Psoas muscle (tissue), 8 donors: ENCODE measurements at regions of chr7 and their contacts with region 1.

Region 1: DNA sequence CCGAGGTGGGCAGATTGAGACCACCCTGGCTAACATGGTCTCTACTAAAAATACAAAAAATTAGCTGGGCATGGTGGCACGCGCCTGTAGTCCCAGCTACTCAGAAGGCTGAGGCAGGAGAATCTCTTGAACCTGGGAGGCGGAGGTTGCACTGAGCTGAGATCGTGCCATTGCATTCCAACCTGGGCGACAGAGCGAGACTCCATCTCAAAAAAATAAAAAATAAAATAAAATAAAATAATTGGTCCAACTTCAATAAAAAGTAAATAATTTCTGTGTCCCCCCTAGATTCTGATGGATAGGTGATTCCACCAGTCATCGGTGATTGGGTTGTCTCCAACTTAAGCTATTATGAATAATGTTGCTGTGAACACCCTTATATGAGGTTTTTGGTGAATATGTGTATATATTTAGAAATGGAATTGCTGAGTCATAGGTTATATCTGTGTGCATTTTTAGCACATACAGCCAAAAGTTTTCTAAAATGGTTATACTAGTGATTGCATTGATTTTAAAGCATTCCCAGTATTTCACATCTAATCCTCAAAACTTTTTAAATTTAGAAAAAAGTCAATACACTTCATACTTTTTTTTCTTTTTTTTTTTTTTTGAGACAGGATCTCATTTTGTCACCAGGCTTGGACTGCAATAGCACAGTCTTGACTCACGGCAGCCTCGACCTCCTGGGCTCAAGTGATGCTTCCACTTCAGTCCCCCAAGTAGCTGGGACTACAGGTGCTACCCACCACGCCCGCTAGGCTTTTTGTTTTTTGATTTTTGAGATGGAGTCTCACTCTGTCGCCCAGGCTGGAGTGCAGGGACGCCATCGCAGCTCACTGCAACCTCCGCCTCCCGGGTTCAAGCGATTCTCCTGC is 13.7 kb upstream of the SRPK2 start:
- DNase-seq: no peak
- ATAC-seq: no peak
- H3K4me3 ChIP-seq: no peak overlapping the region
- H3K27ac ChIP-seq: no peak overlapping the region
- H3K4me1 ChIP-seq: no peaks in the 10 kb centered on the region
- H3K27me3 ChIP-seq: no peaks in the 10 kb centered on the region
- CTCF ChIP-seq: no peak

Region 2: GRCh38 chr7:105268511-105269392 is 133.7 kb before region 1 on chr7:
- intact Hi-C with region 1: no loop called
- DNase-seq: no peak
- ATAC-seq: peak; percentile 86 to 93 (median 89)
- H3K4me3 ChIP-seq: peak overlapping the region; percentile 73
- H3K27ac ChIP-seq: peak overlapping the region; percentile 90
- H3K4me1 ChIP-seq: peaks cover 24% of the 10 kb centered on the region
- H3K27me3 ChIP-seq: no peaks in the 10 kb centered on the region
- CTCF ChIP-seq: no peak

Region 3: GRCh38 chr7:105304040-105304895 is 98.2 kb before region 1 on chr7:
- intact Hi-C with region 1: no loop called
- DNase-seq: no peak
- ATAC-seq: no peak
- H3K4me3 ChIP-seq: no peak overlapping the region
- H3K27ac ChIP-seq: no peak overlapping the region
- H3K4me1 ChIP-seq: peaks cover 27% of the 10 kb centered on the region
- H3K27me3 ChIP-seq: no peaks in the 10 kb centered on the region
- CTCF ChIP-seq: no peak

Region 4: DNA sequence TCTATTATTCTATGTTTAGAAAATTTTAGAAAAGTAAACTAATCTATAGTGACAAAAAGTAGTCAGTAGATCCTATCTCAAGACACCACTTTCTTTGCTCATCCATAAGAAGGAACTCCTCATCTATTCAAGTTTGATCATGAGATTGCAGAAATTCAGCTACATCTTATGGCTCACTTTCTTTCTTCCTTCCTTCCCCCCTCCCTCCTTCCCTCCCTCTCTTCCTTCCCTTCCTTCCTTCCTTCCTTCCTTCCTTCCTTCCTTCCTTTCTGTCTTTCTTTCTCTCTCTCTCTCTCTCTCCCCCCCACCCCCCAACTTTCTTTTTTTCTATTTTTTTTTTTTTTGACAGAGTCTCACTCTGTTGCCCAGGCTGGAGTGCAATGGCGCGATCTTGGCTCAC is 21.5 kb after region 1 on chr7:
- intact Hi-C with region 1: no loop called
- DNase-seq: no peak
- ATAC-seq: no peak
- H3K4me3 ChIP-seq: no peak overlapping the region
- H3K27ac ChIP-seq: no peak overlapping the region
- H3K4me1 ChIP-seq: no peaks in the 10 kb centered on the region
- H3K27me3 ChIP-seq: no peaks in the 10 kb centered on the region
- CTCF ChIP-seq: no peak

Region 5: GRCh38 chr7:105439174-105439893 is 36.9 kb after region 1 on chr7:
- intact Hi-C with region 1: loop called in 1 of 2 experiments (anchors 5 kb)
- DNase-seq: no peak
- ATAC-seq: no peak
- H3K4me3 ChIP-seq: no peak overlapping the region
- H3K27ac ChIP-seq: no peak overlapping the region
- H3K4me1 ChIP-seq: no peaks in the 10 kb centered on the region
- H3K27me3 ChIP-seq: no peaks in the 10 kb centered on the region
- CTCF ChIP-seq: no peak

Region 6: GRCh38 chr7:105664816-105665525 is 262.5 kb after region 1 on chr7:
- intact Hi-C with region 1: no loop called
- DNase-seq: no peak
- ATAC-seq: no peak
- H3K4me3 ChIP-seq: no peak overlapping the region
- H3K27ac ChIP-seq: no peak overlapping the region
- H3K4me1 ChIP-seq: no peaks in the 10 kb centered on the region
- H3K27me3 ChIP-seq: no peaks in the 10 kb centered on the region
- CTCF ChIP-seq: no peak